HCT116 (cell line): ENCODE measurements at regions of chr9 and their contacts with region 1.

Region 1: DNA sequence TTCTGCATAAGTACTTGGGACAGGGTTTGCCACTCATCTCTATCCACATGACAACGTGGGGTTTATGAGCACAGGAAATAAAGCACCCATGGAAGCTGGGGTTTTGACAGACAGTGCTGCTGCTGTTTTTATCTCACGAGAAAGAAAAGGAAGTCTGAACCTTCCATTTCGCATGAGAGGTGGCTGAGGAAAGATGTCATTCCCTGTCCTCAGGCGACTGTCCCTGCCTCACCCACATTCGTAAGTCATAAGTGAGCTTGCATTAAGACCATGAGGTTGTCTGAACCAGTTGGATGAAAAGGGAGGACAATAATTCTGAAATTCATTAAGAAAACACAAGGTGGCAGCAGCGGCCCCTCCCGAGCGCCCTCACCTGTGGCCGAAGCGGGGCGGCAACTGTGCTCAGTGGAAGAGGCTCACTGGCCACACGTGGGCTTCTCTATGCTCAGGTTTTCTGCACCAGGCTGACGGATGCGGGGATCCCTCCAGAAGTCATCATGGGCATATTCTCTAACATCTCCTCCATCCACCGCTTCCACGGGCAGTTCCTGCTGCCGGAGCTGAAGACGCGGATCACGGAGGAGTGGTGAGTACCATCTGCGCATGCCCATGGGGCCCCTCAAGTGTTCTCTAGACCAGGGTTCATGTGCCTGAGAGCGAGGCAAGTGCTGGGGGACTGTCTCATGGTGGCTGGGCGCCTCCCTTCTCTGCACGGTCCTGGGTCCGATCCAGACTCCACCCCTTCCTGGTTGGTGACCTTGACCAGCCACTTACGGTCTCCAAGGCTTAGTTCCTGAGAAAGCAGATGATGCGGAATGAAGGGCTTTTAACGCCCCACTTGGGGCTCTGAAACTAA is 54.7 kb upstream of the SUSD3 start:
- DNase-seq: peak; percentile 73
- ATAC-seq: peak; percentile 94
- H3K4me3 ChIP-seq: peak overlapping the region; percentile 49 to 60
- H3K27ac ChIP-seq: peak overlapping the region; percentile 47; the same call in 1 of the 2 replicates
- H3K4me1 ChIP-seq: peaks cover 10 to 18% of the 10 kb centered on the region in 2 experiments; a peak in 3 of 4 replicates
- H3K27me3 ChIP-seq: no peaks in the 10 kb centered on the region
- CTCF ChIP-seq: peak; percentile 67 to 97 (median 82)
- POLR2A ChIP-seq: no peak
- RAD21 ChIP-seq: peak; percentile 94

Region 2: GRCh38 chr9:92992549-92992948 is 11.2 kb before region 1 on chr9:
- CTCF ChIA-PET with region 1: interaction called, 18 read pairs
- POLR2A ChIA-PET with region 1: interaction called, 4 read pairs
- RAD21 ChIA-PET with region 1: no interaction called
- intact Hi-C with region 1: no loop called
- DNase-seq: no peak
- ATAC-seq: no peak
- H3K4me3 ChIP-seq: no peak overlapping the region
- H3K27ac ChIP-seq: no peak overlapping the region
- H3K4me1 ChIP-seq: peaks cover 0 to 9% of the 10 kb centered on the region in 2 experiments; a peak in 1 of 4 replicates
- H3K27me3 ChIP-seq: no peaks in the 10 kb centered on the region
- CTCF ChIP-seq: no peak
- POLR2A ChIP-seq: no peak
- RAD21 ChIP-seq: no peak

Region 3: DNA sequence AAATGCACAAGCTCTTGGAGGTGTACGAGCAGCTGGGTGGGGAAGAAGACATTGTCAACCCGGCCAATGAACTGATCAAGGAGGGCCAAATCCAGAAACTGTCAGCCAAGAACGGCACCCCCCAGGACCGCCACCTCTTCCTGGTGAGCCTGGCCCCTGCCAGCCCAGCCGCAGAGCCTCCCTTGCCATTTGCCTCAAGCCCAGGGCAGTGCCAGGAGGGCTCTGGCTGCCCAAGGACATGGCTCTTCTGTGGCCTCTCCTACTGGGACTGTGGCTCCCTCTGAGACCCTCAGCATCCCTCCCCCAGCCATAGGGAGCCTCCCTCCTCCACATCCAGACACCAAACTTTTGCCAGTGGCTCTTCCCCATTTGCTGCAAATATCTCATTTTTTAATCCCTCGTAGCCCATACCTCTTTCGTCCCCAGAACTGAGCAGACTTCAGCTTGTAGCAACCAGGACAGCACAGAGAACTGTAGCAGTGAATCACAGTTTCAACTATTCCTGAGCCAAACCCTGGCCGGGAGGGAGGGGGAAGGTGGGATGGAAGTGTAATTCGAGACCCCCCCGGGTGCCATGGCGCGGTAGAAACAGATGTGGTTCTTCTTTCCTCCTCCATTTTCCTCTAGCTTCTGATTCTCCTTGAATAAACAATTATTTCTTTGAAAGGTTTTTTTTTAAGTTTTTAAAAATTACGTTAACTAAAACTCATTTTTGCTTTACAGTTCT is 10.2 kb after region 1 on chr9:
- CTCF ChIA-PET with region 1: interaction called, 16 read pairs
- POLR2A ChIA-PET with region 1: no interaction called
- RAD21 ChIA-PET with region 1: no interaction called
- intact Hi-C with region 1: no loop called
- DNase-seq: no peak
- ATAC-seq: no peak
- H3K4me3 ChIP-seq: no peak overlapping the region
- H3K27ac ChIP-seq: no peak overlapping the region; the same call in 1 of the 2 replicates
- H3K4me1 ChIP-seq: no peaks in the 10 kb centered on the region
- H3K27me3 ChIP-seq: no peaks in the 10 kb centered on the region
- CTCF ChIP-seq: no peak
- POLR2A ChIP-seq: no peak
- RAD21 ChIP-seq: no peak

Region 4: GRCh38 chr9:93095205-93096130 is 91.7 kb after region 1 on chr9:
- CTCF ChIA-PET with region 1: interaction called, 4 read pairs
- POLR2A ChIA-PET with region 1: no interaction called
- RAD21 ChIA-PET with region 1: interaction called in 1 of 2 experiments, 3 read pairs
- intact Hi-C with region 1: loop called (anchors 5 kb)
- DNase-seq: peak; percentile 96
- ATAC-seq: peak; percentile 84
- H3K4me3 ChIP-seq: peak overlapping the region; percentile 63 to 94
- H3K27ac ChIP-seq: peak overlapping the region; percentile 81
- H3K4me1 ChIP-seq: peaks cover 41 to 81% of the 10 kb centered on the region in 2 experiments
- H3K27me3 ChIP-seq: no peaks in the 10 kb centered on the region
- CTCF ChIP-seq: no peak
- POLR2A ChIP-seq: peak; percentile 48
- RAD21 ChIP-seq: no peak

Region 5: GRCh38 chr9:93566408-93567270 is 562.9 kb after region 1 on chr9:
- CTCF ChIA-PET with region 1: no interaction called
- POLR2A ChIA-PET with region 1: no interaction called
- RAD21 ChIA-PET with region 1: no interaction called
- intact Hi-C with region 1: loop called (anchors 10 kb)
- DNase-seq: peak; percentile 86
- ATAC-seq: peak; percentile 98
- H3K4me3 ChIP-seq: peak overlapping the region; percentile 67 to 70
- H3K27ac ChIP-seq: peak overlapping the region; percentile 74
- H3K4me1 ChIP-seq: peaks cover 4 to 12% of the 10 kb centered on the region in 2 experiments; a peak in 2 of 4 replicates
- H3K27me3 ChIP-seq: no peaks in the 10 kb centered on the region
- CTCF ChIP-seq: peak; percentile 74 to 93 (median 87)
- POLR2A ChIP-seq: peak; percentile 22
- RAD21 ChIP-seq: peak; percentile 80